SK-N-SH (cell line): ENCODE measurements at regions of chr17 and their contacts with region 1.

Region 1: GRCh38 chr17:48878918-48879898 is 13.4 kb upstream of the ATP5MC1 start:
- DNase-seq: peak; percentile 87
- H3K4me3 ChIP-seq: no peak overlapping the region
- H3K27ac ChIP-seq: no peak overlapping the region
- H3K4me1 ChIP-seq: no peaks in the 10 kb centered on the region
- H3K27me3 ChIP-seq: peaks cover 26% of the 10 kb centered on the region; the same call in 1 of the 2 replicates
- CTCF ChIP-seq: peak; percentile 100
- EP300 ChIP-seq: no peak
- RAD21 ChIP-seq: peak; percentile 100

Region 2: DNA sequence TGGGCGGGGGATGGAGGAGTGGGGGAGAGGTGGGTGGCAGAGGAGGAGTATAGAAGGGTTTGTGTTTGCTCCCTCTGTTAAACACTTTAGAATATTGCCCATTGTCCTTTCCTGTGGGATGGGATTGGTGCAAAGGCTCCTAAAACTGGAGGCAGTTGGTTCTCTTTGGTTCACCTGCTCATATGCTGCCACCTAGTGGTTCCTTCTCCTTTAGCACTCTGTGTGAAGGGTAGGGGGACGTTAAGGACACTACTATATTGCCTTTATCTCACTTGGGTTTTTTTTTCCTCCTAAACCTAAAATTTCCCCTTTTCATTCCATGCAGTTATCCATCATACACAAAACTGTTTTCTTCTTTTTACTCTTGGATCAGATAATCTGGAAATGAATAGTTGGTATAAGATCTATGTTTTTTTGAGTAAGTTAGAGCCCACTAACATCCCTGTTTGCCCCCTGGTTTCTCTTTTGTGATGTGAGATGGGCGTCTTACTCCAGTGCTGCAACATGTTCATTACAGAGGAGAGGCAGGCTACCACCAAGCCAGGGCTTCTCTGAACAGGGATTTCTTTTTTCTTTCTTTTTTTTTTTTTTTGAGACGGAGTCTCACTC is 747.9 kb before region 1 on chr17:
- CTCF ChIA-PET with region 1: no interaction called
- POLR2A ChIA-PET with region 1: no interaction called
- DNase-seq: peak; percentile 82
- H3K4me3 ChIP-seq: no peak overlapping the region; a peak in 1 of 4 replicates
- H3K27ac ChIP-seq: no peak overlapping the region
- H3K4me1 ChIP-seq: peaks cover 7 to 17% of the 10 kb centered on the region in 2 experiments; a peak in 2 of 4 replicates
- H3K27me3 ChIP-seq: peaks cover 8% of the 10 kb centered on the region; the same call in 1 of the 2 replicates
- CTCF ChIP-seq: peak; percentile 99
- EP300 ChIP-seq: no peak
- RAD21 ChIP-seq: peak; percentile 99

Region 3: GRCh38 chr17:48704361-48705248 is 174.6 kb before region 1 on chr17:
- CTCF ChIA-PET with region 1: interaction called, 16 read pairs
- POLR2A ChIA-PET with region 1: no interaction called
- DNase-seq: no peak
- H3K4me3 ChIP-seq: no peak overlapping the region
- H3K27ac ChIP-seq: no peak overlapping the region
- H3K4me1 ChIP-seq: no peaks in the 10 kb centered on the region
- H3K27me3 ChIP-seq: peaks cover 99% of the 10 kb centered on the region
- CTCF ChIP-seq: no peak
- EP300 ChIP-seq: no peak
- RAD21 ChIP-seq: no peak

Region 4: DNA sequence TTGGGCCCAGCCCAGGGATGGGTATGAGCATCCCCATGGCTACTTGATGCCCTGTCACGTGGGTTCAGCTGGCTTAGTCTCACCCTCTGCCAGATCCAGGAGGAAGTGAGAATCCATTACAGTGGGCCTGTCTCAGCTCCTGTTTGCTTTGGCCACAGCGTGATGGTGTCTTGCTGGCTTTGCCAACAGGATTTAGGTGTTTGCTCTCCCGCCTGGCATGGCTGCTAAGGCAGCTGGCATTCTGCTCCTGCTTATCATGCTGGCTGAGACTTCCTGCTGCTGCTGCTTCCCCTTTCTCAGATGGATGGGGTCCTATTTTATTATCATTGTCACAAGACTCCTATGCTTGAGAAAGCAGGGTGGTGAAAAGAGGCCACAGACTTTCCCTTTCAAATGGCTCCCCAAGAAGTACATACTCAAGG is 122.4 kb before region 1 on chr17:
- CTCF ChIA-PET with region 1: interaction called, 11 read pairs
- POLR2A ChIA-PET with region 1: no interaction called
- DNase-seq: no peak
- H3K4me3 ChIP-seq: no peak overlapping the region
- H3K27ac ChIP-seq: no peak overlapping the region
- H3K4me1 ChIP-seq: no peaks in the 10 kb centered on the region
- H3K27me3 ChIP-seq: peaks cover 98% of the 10 kb centered on the region
- CTCF ChIP-seq: no peak
- EP300 ChIP-seq: no peak
- RAD21 ChIP-seq: no peak

Region 5: GRCh38 chr17:48830840-48831548 is 48.2 kb before region 1 on chr17 and contains the start of gene CALCOCO2:
- CTCF ChIA-PET with region 1: interaction called, 1,196 read pairs
- POLR2A ChIA-PET with region 1: no interaction called
- DNase-seq: peak; percentile 99
- H3K4me3 ChIP-seq: peak within 1 kb of the TSS; percentile 74 to 98
- H3K27ac ChIP-seq: peak within 1 kb of the TSS; percentile 53 to 71; a peak in 3 of 4 replicates
- H3K4me1 ChIP-seq: peaks cover 3 to 7% of the 10 kb centered on the region in 2 experiments; a peak in 3 of 4 replicates
- H3K27me3 ChIP-seq: no peaks in the 10 kb centered on the region
- CTCF ChIP-seq: peak; percentile 26
- EP300 ChIP-seq: no peak
- RAD21 ChIP-seq: no peak
- polyA plus RNA-seq, gene CALCOCO2: 49.9 and 67.7 TPM in 2 replicates

Region 6: GRCh38 chr17:48901241-48901640 is 22.0 kb after region 1 on chr17:
- CTCF ChIA-PET with region 1: interaction called, 20 read pairs
- POLR2A ChIA-PET with region 1: no interaction called
- DNase-seq: no peak
- H3K4me3 ChIP-seq: no peak overlapping the region
- H3K27ac ChIP-seq: no peak overlapping the region
- H3K4me1 ChIP-seq: no peaks in the 10 kb centered on the region
- H3K27me3 ChIP-seq: no peaks in the 10 kb centered on the region
- CTCF ChIP-seq: no peak
- EP300 ChIP-seq: no peak
- RAD21 ChIP-seq: no peak

Region 7: DNA sequence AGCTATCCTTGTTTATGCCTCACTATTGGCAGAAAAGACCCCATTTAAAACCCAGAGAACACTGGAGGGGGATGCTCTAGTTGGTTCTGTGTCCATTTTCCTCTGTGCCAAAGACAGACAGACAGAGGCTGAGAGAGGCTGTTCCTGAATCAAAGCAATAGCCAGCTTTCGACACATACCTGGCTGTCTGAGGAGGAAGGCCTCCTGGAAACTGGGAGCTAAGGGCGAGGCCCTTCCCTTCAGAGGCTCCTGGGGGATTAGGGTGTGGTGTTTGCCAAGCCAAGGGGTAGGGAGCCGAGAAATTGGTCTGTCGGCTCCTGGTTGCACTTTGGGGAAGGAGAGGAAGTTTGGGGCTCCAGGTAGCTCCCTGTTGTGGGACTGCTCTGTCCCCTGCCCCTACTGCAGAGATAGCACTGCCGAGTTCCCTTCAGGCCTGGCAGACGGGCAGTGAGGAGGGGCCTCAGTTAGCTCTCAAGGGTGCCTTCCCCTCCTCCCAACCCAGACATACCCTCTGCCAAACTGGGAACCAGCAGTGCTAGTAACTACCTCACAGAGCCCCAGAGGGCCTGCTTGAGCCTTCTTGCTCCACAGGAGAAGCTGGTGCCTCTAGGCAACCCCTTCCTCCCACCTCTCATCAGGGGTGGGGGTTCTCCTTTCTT is 174.1 kb after region 1 on chr17:
- CTCF ChIA-PET with region 1: interaction called, 10 read pairs
- POLR2A ChIA-PET with region 1: no interaction called
- DNase-seq: no peak
- H3K4me3 ChIP-seq: no peak overlapping the region
- H3K27ac ChIP-seq: no peak overlapping the region
- H3K4me1 ChIP-seq: no peaks in the 10 kb centered on the region
- H3K27me3 ChIP-seq: peaks cover 88% of the 10 kb centered on the region
- CTCF ChIP-seq: no peak
- EP300 ChIP-seq: no peak
- RAD21 ChIP-seq: no peak

Region 8: GRCh38 chr17:49063652-49064051 is 184.4 kb after region 1 on chr17:
- CTCF ChIA-PET with region 1: no interaction called
- POLR2A ChIA-PET with region 1: no interaction called
- DNase-seq: no peak
- H3K4me3 ChIP-seq: no peak overlapping the region
- H3K27ac ChIP-seq: no peak overlapping the region
- H3K4me1 ChIP-seq: no peaks in the 10 kb centered on the region
- H3K27me3 ChIP-seq: peaks cover 96% of the 10 kb centered on the region
- CTCF ChIP-seq: no peak
- EP300 ChIP-seq: no peak
- RAD21 ChIP-seq: no peak